Activated CD4-positive, alpha-beta T cell treated with anti-CD3 and anti-CD28 coated beads for 36 hours (primary cell): ENCODE measurements at regions of chr3 and their contacts with region 1.

Region 1: GRCh38 chr3:173340626-173341025 is 56.9 kb upstream of the NLGN1 start:
- DNase-seq: no peak
- ATAC-seq: no peak
- H3K4me3 Mint-ChIP-seq: no peak overlapping the region
- H3K27ac Mint-ChIP-seq: no peak overlapping the region
- H3K4me1 Mint-ChIP-seq: no peaks in the 10 kb centered on the region
- H3K27me3 Mint-ChIP-seq: no peaks in the 10 kb centered on the region

Region 2: DNA sequence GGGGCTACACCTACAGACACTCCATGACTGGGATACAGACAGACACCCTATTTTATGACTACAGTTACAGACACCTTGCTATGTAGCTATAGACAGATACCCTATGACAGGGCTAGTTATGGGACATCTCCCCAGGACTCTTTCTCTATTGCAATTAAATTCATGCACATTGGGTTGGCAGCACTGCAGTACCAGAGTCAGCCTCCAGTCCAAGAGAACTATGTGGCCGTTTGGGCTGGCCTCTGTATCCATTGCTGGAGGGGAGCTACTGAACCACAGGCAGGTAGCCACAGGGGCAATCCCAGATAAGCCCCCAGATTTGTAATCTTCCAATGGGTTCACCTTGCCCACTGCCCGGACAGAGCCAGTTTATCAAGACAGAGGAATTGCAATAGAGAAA is 91.2 kb before region 1 on chr3:
- CTCF ChIA-PET with region 1: no interaction called
- POLR2A ChIA-PET with region 1: no interaction called
- intact Hi-C with region 1: no loop called
- DNase-seq: no peak
- ATAC-seq: no peak
- H3K4me3 Mint-ChIP-seq: no peak overlapping the region
- H3K27ac Mint-ChIP-seq: no peak overlapping the region
- H3K4me1 Mint-ChIP-seq: no peaks in the 10 kb centered on the region
- H3K27me3 Mint-ChIP-seq: no peaks in the 10 kb centered on the region

Region 3: DNA sequence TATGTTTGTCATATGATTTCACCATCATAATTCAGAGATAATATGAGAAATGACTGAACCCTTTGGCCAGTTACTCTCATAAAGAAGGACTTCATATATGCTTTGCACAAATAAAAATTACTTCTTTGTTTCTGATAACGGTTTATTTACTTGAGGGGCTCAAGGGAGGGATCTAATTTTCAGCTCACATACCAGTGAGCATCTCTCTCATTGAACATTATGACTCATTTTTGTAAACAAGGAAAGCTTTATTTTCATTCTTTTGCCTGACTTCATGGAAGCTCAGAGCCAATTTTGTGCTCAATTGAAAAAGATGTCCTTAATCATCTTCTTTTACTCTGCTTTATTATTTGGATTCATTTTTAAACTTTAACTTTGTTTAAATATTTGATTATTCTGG is 62.8 kb after region 1 on chr3:
- CTCF ChIA-PET with region 1: no interaction called
- POLR2A ChIA-PET with region 1: no interaction called
- intact Hi-C with region 1: loop called in 1 of 2 experiments (anchors 10 kb)
- DNase-seq: no peak
- ATAC-seq: no peak
- H3K4me3 Mint-ChIP-seq: no peak overlapping the region
- H3K27ac Mint-ChIP-seq: no peak overlapping the region
- H3K4me1 Mint-ChIP-seq: peaks cover under 1% of the 10 kb centered on the region
- H3K27me3 Mint-ChIP-seq: peaks cover 22% of the 10 kb centered on the region

Region 4: GRCh38 chr3:173639098-173639497 is 298.5 kb after region 1 on chr3:
- CTCF ChIA-PET with region 1: no interaction called
- POLR2A ChIA-PET with region 1: no interaction called
- intact Hi-C with region 1: no loop called
- DNase-seq: no peak
- ATAC-seq: no peak
- H3K4me3 Mint-ChIP-seq: no peak overlapping the region
- H3K27ac Mint-ChIP-seq: no peak overlapping the region
- H3K4me1 Mint-ChIP-seq: no peaks in the 10 kb centered on the region
- H3K27me3 Mint-ChIP-seq: no peaks in the 10 kb centered on the region

Region 5: GRCh38 chr3:173778251-173778650 is 437.6 kb after region 1 on chr3:
- CTCF ChIA-PET with region 1: no interaction called
- POLR2A ChIA-PET with region 1: no interaction called
- intact Hi-C with region 1: loop called in 1 of 2 experiments (anchors 5 kb)
- DNase-seq: no peak
- ATAC-seq: no peak
- H3K4me3 Mint-ChIP-seq: no peak overlapping the region
- H3K27ac Mint-ChIP-seq: no peak overlapping the region
- H3K4me1 Mint-ChIP-seq: no peaks in the 10 kb centered on the region
- H3K27me3 Mint-ChIP-seq: no peaks in the 10 kb centered on the region